ENCODE measurements at regions of chr9 and their contacts with region 1.

Region 1: GRCh38 chr9:75265525-75265972 is 177.2 kb downstream of the OSTF1 start:
- DNase-seq: peak in 8 of 9 donors; percentile 13 to 65 (median 42)
- ATAC-seq: peak; percentile 70
- H3K4me3 ChIP-seq: no peak overlapping the region
- H3K4me3 Mint-ChIP-seq: peak overlapping the region in 1 of 10 donors; percentile 14
- H3K27ac ChIP-seq: no peak overlapping the region
- H3K27ac Mint-ChIP-seq: no peak overlapping the region
- H3K4me1 ChIP-seq: no peaks in the 10 kb centered on the region
- H3K4me1 Mint-ChIP-seq: no peaks in the 10 kb centered on the region
- H3K27me3 ChIP-seq: no peaks in the 10 kb centered on the region
- H3K27me3 Mint-ChIP-seq: no peaks in the 10 kb centered on the region

Region 2: GRCh38 chr9:75866273-75866871 is 600.8 kb after region 1 on chr9:
- CTCF ChIA-PET with region 1: no interaction called
- POLR2A ChIA-PET with region 1: no interaction called
- intact Hi-C with region 1: loop called (anchors 2 to 5 kb)
- DNase-seq: peak in 6 of 9 donors; percentile 18 to 61 (median 52)
- ATAC-seq: peak; percentile 61
- H3K4me3 ChIP-seq: no peak overlapping the region
- H3K4me3 Mint-ChIP-seq: no peak overlapping the region
- H3K27ac ChIP-seq: no peak overlapping the region
- H3K27ac Mint-ChIP-seq: no peak overlapping the region
- H3K4me1 ChIP-seq: peaks cover 0 to 18% of the 10 kb centered on the region in 2 donors
- H3K4me1 Mint-ChIP-seq: peaks cover 0 to 33% (median 23%) of the 10 kb centered on the region in 7 donors
- H3K27me3 ChIP-seq: no peaks in the 10 kb centered on the region
- H3K27me3 Mint-ChIP-seq: peaks cover 0 to 4% (median 0%) of the 10 kb centered on the region in 5 donors

Region 3: GRCh38 chr9:76090330-76090729 is 824.8 kb after region 1 on chr9:
- CTCF ChIA-PET with region 1: no interaction called
- POLR2A ChIA-PET with region 1: no interaction called
- intact Hi-C with region 1: loop called in 1 of 2 experiments (anchors 2 kb)
- DNase-seq: no peak
- ATAC-seq: no peak
- H3K4me3 ChIP-seq: no peak overlapping the region
- H3K4me3 Mint-ChIP-seq: no peak overlapping the region
- H3K27ac ChIP-seq: no peak overlapping the region
- H3K27ac Mint-ChIP-seq: peak overlapping the region in 3 of 9 donors; percentile 2 to 83 (median 7)
- H3K4me1 ChIP-seq: no peaks in the 10 kb centered on the region
- H3K4me1 Mint-ChIP-seq: peaks cover 0 to 23% (median 9%) of the 10 kb centered on the region in 7 donors
- H3K27me3 ChIP-seq: no peaks in the 10 kb centered on the region
- H3K27me3 Mint-ChIP-seq: no peaks in the 10 kb centered on the region

Region 4: GRCh38 chr9:76297721-76298239 is 1032.2 kb after region 1 on chr9:
- CTCF ChIA-PET with region 1: interaction called, 20 read pairs
- POLR2A ChIA-PET with region 1: no interaction called
- intact Hi-C with region 1: loop called (anchors 1 to 2 kb)
- DNase-seq: no peak
- ATAC-seq: no peak
- H3K4me3 ChIP-seq: no peak overlapping the region
- H3K4me3 Mint-ChIP-seq: peak overlapping the region in 5 of 10 donors; percentile 5 to 32 (median 12)
- H3K27ac ChIP-seq: no peak overlapping the region
- H3K27ac Mint-ChIP-seq: peak overlapping the region in 1 of 9 donors; percentile 43
- H3K4me1 ChIP-seq: no peaks in the 10 kb centered on the region
- H3K4me1 Mint-ChIP-seq: peaks cover 0 to 14% (median 2%) of the 10 kb centered on the region in 7 donors
- H3K27me3 ChIP-seq: no peaks in the 10 kb centered on the region
- H3K27me3 Mint-ChIP-seq: no peaks in the 10 kb centered on the region

Region 5: DNA sequence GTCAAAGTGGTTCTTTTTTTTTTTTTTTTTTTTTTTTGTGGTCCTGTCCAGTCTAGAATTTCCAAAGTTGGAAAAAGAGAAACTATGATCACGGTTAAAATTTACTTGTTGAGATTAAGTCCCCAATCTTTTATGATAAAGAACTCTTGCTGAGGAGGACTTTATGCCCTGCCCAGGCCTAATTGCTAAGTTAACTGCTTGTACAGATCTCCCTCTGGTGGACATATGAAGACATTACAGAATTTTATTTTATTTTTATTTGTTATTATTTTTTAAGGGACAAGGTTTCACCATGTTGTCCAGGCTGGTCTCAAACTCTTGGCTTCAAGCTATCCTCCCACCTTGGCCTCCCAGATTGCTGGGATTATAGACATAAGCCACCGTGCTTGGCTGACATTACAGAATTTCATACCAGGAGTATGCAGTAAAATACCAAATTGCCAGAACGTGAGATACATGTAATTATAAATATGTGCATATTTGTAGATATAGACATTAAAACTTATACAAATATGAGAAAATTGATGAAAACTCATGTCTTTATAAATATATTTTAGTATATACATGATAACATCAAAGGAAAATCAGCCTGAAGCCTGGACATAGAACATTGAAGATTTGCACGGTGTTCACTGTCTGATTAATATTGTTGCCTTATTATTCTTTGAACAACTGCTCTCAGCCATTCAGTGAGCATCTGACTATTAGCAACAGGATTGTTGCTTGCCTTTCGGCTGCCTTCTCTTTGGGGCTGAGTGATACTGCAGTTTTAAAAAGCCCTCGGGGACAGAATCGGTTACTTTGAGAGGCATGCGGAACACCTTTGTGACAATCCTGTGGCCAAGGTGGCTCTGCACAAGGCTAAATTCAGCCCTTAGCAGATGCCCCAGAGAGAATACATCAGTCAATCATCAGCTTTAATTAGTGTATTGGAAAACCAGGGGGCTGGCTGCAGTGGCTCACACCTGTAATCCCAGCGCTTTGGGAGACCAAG is 1037.7 kb after region 1 on chr9:
- CTCF ChIA-PET with region 1: interaction called, 20 read pairs
- POLR2A ChIA-PET with region 1: no interaction called
- intact Hi-C with region 1: loop called (anchors 1 to 2 kb)
- DNase-seq: peak in 6 of 9 donors; percentile 28 to 60 (median 54)
- ATAC-seq: peak; percentile 75
- H3K4me3 ChIP-seq: no peak overlapping the region
- H3K4me3 Mint-ChIP-seq: no peak overlapping the region
- H3K27ac ChIP-seq: no peak overlapping the region
- H3K27ac Mint-ChIP-seq: no peak overlapping the region
- H3K4me1 ChIP-seq: no peaks in the 10 kb centered on the region
- H3K4me1 Mint-ChIP-seq: peaks cover 0 to 3% (median 0%) of the 10 kb centered on the region in 7 donors
- H3K27me3 ChIP-seq: no peaks in the 10 kb centered on the region
- H3K27me3 Mint-ChIP-seq: peaks cover 0 to 17% (median 7%) of the 10 kb centered on the region in 5 donors

Region 6: DNA sequence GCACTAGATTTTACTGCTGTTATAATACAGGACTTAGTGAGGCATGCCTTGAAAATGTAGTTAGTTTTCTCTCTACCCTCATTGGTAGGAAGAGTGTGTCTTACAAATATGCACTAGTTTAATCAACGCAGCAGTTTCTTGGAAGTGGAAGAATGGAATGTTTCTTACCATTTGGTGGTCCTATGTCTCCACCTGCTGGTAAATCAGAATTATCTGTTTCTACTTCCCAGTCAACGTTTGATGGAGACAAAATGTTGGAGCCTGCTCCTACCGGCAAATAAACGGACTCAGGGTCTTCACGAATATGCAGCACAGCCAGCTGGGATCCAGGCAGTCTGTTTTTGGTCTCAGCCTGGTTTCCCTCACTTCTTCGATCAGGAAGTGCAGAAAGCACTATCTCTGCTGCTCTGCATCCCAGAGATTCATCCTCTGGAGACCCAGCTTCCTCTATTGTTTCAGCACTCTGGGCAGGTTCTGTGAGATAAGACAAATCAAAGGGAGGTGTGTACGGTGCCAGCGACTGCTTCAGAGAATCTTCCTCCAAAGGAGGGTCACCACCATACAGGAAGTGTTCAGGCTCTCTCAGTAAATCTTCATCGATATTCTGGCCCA is 1439.2 kb after region 1 on chr9:
- CTCF ChIA-PET with region 1: no interaction called
- POLR2A ChIA-PET with region 1: no interaction called
- intact Hi-C with region 1: loop called (anchors 2 to 5 kb)
- DNase-seq: peak in 7 of 9 donors; percentile 12 to 55 (median 35)
- ATAC-seq: peak; percentile 63
- H3K4me3 ChIP-seq: no peak overlapping the region
- H3K4me3 Mint-ChIP-seq: no peak overlapping the region
- H3K27ac ChIP-seq: no peak overlapping the region
- H3K27ac Mint-ChIP-seq: no peak overlapping the region
- H3K4me1 ChIP-seq: no peaks in the 10 kb centered on the region
- H3K4me1 Mint-ChIP-seq: peaks cover 0 to 16% (median 1%) of the 10 kb centered on the region in 7 donors
- H3K27me3 ChIP-seq: no peaks in the 10 kb centered on the region
- H3K27me3 Mint-ChIP-seq: peaks cover 35 to 51% (median 40%) of the 10 kb centered on the region in 5 donors